Endothelial cell of umbilical vein (primary cell): ENCODE measurements at regions of chr3 and their contacts with region 1.

Region 1: GRCh38 chr3:65170390-65171042 is 482.7 kb upstream of the ADAMTS9 start:
- DNase-seq: peak; percentile 59
- H3K4me3 ChIP-seq: no peak overlapping the region
- H3K27ac ChIP-seq: no peak overlapping the region
- H3K4me1 ChIP-seq: peaks cover 22% of the 10 kb centered on the region
- H3K27me3 ChIP-seq: no peaks in the 10 kb centered on the region
- CTCF ChIP-seq: peak; percentile 42 to 47
- POLR2A ChIP-seq: no peak

Region 2: DNA sequence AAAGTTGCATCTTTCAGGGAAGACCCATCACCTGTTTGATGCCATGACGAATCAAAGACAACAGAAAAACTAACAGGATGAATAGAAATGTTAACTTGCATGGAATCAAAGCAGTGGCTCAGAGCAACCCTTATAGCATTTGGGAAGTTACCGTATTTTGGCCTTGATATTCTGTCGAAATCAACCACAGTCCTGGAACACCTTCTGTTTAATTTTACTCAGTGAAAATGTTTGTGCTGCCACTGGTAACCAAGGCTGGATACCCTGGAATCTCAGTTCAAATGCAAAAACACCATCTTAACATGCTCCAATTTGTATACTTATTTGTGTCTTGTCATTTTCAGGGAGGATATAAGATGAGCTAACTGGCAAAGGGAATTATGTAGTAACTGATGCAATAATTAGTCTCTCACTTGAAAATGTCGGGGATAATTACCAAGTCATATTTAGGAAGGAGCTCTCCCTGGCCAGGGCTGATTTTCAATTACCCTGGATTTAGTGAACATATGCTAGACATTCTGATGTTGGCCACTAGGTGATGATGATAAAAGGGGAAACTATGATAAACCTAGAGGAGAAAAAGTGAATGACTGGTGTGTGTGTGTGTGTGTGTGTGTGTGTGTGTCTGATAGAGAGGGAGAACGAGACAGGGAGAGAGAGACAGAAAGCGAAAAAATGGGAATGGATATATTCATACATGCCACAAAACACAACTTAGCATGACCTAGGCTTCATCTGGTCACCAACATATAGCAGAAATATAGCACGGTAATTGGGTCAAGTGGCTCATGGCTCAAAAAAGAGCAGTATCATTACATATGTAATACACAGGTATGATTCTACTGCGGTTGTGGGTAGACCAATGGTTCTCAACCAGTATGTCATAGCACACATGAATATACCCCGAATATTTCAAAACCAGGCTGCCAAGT is 926.2 kb before region 1 on chr3:
- CTCF ChIA-PET with region 1: no interaction called
- POLR2A ChIA-PET with region 1: no interaction called
- dilution Hi-C with region 1: no loop called
- intact Hi-C with region 1: no loop called
- DNase-seq: peak; percentile 41
- H3K4me3 ChIP-seq: no peak overlapping the region
- H3K27ac ChIP-seq: no peak overlapping the region
- H3K4me1 ChIP-seq: no peaks in the 10 kb centered on the region
- H3K27me3 ChIP-seq: peaks cover 0 to 4% of the 10 kb centered on the region in 2 experiments
- CTCF ChIP-seq: peak; percentile 42 to 51
- POLR2A ChIP-seq: no peak

Region 3: DNA sequence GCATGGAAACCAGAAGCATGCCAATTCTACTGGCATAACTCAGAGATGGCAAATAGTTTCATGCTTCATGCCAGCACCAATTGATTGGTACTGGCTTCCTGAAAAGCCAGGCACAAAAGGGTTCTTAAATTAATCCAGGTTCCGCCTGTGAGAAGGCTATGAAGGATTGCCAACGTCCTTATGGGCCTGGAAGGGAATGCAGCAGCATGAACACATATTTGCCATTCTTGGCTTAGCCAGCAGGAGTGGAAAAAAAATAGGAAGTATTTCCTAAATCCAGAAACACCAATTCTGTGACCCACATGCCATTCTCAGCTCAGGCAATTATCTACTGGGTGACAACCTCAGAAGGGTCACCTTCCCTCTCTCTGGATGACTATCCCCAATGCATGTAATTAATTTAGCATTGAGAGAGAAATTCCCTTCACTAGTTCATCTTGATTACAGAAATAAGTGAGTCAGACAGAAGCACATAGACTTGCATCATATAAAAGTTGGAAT is 518.7 kb before region 1 on chr3:
- CTCF ChIA-PET with region 1: interaction called, 18 read pairs
- POLR2A ChIA-PET with region 1: interaction called, 4 read pairs
- dilution Hi-C with region 1: no loop called
- intact Hi-C with region 1: no loop called
- DNase-seq: peak; percentile 14
- H3K4me3 ChIP-seq: no peak overlapping the region
- H3K27ac ChIP-seq: no peak overlapping the region
- H3K4me1 ChIP-seq: peaks cover 22% of the 10 kb centered on the region
- H3K27me3 ChIP-seq: no peaks in the 10 kb centered on the region
- CTCF ChIP-seq: no peak
- POLR2A ChIP-seq: no peak

Region 4: GRCh38 chr3:64693031-64693430 is 477.5 kb before region 1 on chr3:
- CTCF ChIA-PET with region 1: interaction called, 15 read pairs
- POLR2A ChIA-PET with region 1: no interaction called
- dilution Hi-C with region 1: no loop called
- intact Hi-C with region 1: no loop called
- DNase-seq: peak; percentile 83
- H3K4me3 ChIP-seq: no peak overlapping the region
- H3K27ac ChIP-seq: no peak overlapping the region
- H3K4me1 ChIP-seq: peaks cover 20% of the 10 kb centered on the region
- H3K27me3 ChIP-seq: no peaks in the 10 kb centered on the region
- CTCF ChIP-seq: no peak
- POLR2A ChIP-seq: no peak

Region 5: DNA sequence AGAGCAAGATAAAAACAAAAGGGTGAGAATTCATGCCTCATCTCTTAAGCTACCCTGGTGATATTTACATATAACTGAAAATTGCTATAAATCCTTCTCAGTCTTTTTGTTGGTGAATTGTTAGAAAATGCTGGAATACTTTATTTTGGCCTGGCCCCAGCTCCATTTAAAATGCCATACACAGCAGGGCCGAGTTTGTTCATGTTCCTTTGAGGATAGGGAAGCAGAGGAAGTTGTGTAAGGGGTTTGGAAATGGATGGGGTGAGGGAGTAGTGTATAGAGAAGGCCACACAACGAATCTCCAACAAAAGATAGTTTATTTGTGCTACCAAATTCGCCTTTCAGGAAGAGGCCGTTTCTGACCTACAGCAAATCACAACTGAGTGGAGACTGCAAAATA is 404.1 kb before region 1 on chr3:
- CTCF ChIA-PET with region 1: interaction called, 10 read pairs
- POLR2A ChIA-PET with region 1: no interaction called
- dilution Hi-C with region 1: no loop called
- intact Hi-C with region 1: no loop called
- DNase-seq: peak; percentile 11
- H3K4me3 ChIP-seq: no peak overlapping the region
- H3K27ac ChIP-seq: no peak overlapping the region
- H3K4me1 ChIP-seq: no peaks in the 10 kb centered on the region
- H3K27me3 ChIP-seq: no peaks in the 10 kb centered on the region
- CTCF ChIP-seq: no peak
- POLR2A ChIP-seq: no peak

Region 6: DNA sequence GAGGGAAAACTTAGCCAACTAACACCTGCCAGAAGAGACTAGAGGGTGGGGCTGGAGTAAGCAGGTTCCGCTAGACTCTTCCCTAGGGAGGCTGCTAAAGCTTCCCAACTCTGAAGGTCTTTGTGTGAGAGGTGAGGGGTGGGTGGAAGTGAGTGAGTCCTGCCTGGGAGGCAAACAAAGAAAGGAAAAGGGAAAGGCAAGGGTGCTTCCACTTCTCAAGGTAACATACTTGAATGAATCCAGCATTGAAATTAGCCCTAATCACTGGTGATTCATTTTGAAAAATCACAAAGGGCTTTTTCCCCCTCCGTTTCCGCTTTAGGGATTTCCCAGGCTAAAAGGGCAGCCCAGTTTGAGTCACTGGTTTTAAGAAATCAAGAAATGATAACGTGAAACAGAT is 262.2 kb before region 1 on chr3:
- CTCF ChIA-PET with region 1: interaction called, 3 read pairs
- POLR2A ChIA-PET with region 1: no interaction called
- dilution Hi-C with region 1: no loop called
- intact Hi-C with region 1: loop called (anchors 1 kb)
- DNase-seq: peak; percentile 90
- H3K4me3 ChIP-seq: peak overlapping the region in 1 of 3 experiments; percentile 20
- H3K27ac ChIP-seq: peak overlapping the region; percentile 89
- H3K4me1 ChIP-seq: peaks cover 30% of the 10 kb centered on the region
- H3K27me3 ChIP-seq: no peaks in the 10 kb centered on the region
- CTCF ChIP-seq: no peak
- POLR2A ChIP-seq: no peak

Region 7: GRCh38 chr3:64995857-64996551 is 174.5 kb before region 1 on chr3:
- CTCF ChIA-PET with region 1: interaction called, 15 read pairs
- POLR2A ChIA-PET with region 1: no interaction called
- dilution Hi-C with region 1: no loop called
- intact Hi-C with region 1: no loop called
- DNase-seq: peak; percentile 91
- H3K4me3 ChIP-seq: no peak overlapping the region
- H3K27ac ChIP-seq: peak overlapping the region; percentile 60
- H3K4me1 ChIP-seq: peaks cover 33% of the 10 kb centered on the region
- H3K27me3 ChIP-seq: no peaks in the 10 kb centered on the region
- CTCF ChIP-seq: no peak
- POLR2A ChIP-seq: no peak

Region 8: DNA sequence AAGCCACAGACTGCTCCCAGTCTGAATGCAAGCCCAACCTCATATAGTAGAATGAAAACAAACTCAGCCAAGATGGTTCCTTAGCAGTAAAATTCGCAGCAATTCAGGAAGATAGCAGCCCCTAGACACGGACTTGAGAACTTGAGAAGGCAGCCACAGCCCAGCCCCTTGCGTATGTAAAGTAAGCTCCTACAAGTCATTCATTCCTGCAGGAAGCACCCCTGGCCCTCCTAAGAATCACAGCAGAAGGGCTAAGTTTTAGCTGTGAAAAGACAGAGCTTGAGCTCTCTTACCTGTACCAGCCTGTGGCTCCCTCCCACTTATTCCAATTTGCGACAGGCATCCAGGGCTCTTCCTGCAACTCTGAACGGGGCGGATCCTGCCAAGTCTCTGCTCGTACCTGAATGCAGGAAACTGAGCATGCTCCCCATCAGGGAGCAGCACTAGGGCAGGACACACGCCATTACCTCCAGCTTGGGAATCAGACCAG is 731.8 kb after region 1 on chr3:
- CTCF ChIA-PET with region 1: no interaction called
- POLR2A ChIA-PET with region 1: no interaction called
- dilution Hi-C with region 1: no loop called
- intact Hi-C with region 1: no loop called
- DNase-seq: no peak
- H3K4me3 ChIP-seq: no peak overlapping the region
- H3K27ac ChIP-seq: no peak overlapping the region
- H3K4me1 ChIP-seq: peaks cover 37% of the 10 kb centered on the region
- H3K27me3 ChIP-seq: no peaks in the 10 kb centered on the region
- CTCF ChIP-seq: no peak
- POLR2A ChIP-seq: no peak